PC-9 (cell line): ENCODE measurements at regions of chr19 and their contacts with region 1.

Region 1: DNA sequence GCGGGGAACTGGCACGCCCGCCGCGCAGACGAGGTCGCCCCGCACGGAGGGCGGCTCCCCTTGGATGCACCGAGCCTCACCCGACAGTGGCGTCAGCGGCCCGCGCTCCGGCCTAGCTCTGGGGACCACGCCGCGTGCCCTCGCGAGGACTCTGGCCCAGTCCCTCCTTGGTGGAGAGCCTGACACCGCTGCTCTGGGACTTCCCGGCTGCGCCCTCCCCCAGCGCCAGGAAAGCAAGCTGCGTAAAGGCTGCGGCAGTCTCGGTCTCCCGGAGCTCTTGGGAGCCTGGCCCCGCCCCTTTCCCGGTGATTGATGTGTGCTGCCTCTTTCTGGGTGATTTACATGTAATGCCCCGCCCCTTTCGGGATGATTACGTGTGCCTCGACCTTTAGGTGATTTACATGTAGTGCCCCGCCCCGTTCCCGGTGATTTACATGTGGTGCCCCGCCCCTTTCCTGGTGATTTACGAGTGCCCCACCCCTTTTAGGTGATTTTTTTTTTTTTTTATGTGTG is at the start of gene LENG9:
- DNase-seq: peak; percentile 97 to 99
- H3K4me3 ChIP-seq: peak within 1 kb of the TSS; percentile 77
- H3K27ac ChIP-seq: peak within 1 kb of the TSS; percentile 89
- H3K4me1 ChIP-seq: peaks cover 18% of the 10 kb centered on the region
- H3K27me3 ChIP-seq: no peaks in the 10 kb centered on the region
- CTCF ChIP-seq: no peak
- total RNA-seq, gene LENG9: 7.0 and 8.9 TPM in 2 replicates

Region 2: DNA sequence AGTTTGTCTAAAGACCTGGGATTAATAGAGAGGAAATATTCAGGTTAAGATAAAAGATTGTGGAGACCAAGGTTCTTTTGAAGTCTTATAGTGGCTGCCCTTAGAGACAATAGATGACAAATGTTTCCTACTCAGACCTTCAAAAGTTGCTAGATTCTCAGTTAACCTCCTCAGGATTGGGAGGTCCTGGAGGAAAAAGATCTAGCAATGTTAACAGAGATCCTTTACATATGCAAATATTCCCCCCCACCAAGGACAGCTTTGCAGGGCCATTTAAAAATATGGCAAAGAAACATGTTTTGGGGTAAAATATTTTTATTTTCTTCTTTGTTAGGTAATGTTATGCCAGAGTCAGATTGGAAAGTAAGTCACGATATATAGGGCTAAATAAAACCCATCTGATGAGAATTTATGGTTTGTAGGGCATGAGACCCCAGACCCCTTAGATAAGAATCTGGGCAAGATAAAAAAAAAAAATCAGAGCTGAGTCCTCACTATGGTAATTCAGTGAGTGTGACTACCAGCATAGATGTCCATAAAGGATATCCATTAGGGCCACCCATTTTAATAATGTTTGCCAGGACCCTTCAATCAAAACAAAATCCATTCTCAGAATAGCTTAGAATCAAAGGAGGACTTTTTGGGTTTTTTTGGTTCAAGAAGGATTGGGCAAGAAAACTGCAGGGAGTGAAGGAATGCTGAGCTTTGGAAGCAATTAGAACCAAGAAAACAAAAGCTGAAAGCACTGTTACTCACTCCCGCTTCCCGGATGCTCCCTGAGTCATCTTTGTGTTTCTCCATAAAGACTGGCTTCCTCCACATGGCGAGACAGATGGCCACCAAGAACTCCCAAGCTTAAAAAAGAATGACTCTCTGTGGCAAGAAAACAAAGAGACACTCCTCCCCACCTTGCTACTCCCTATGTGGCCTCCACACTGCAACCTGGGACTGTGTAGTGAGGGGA is 428.1 kb before region 1 on chr19:
- CTCF ChIA-PET with region 1: interaction called, 16 read pairs
- POLR2A ChIA-PET with region 1: no interaction called
- intact Hi-C with region 1: no loop called
- DNase-seq: peak; percentile 32 to 75
- H3K4me3 ChIP-seq: no peak overlapping the region
- H3K27ac ChIP-seq: peak overlapping the region; percentile 36
- H3K4me1 ChIP-seq: peaks cover 21% of the 10 kb centered on the region
- H3K27me3 ChIP-seq: no peaks in the 10 kb centered on the region
- CTCF ChIP-seq: no peak

Region 3: DNA sequence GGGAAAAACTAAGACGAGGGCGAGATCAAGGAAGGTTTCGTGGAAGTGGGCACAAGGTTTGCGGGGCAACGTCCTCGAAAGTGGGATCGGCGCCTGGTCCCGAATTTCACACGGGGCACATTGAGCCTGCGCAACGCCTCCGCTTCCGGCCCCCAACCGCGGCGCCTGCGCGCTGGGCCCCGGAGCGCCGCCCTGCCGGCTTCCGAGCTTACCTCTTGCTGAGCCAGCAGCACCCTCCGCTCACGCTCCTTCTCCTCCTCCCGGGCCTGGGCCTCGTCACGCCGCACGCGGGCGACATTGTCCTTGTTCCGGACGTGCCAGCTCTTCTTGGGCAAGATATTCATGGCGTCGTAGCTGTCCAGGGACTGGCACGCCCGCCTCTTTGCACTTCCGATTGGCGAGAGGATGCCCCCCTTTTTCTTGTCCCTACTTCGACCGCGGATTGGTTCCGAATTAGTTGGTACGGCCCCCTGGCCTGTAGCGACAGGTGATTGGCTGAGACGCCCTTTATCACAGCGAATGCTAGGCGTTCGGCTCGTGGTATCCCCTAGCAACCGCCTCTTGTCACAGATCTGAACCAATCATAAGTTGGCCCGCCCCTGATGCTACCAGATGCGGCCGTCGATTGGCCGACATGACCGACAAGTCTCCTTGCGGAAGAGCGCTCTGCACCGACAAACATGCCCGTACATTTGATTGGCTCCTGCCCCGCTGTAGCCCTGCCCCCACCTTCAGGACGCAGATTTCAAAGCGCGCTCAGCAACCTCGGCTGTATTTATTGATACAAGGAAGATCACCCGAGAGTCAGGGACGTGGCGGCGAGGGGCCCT is 304.0 kb before region 1 on chr19 and contains the start of gene LENG1:
- CTCF ChIA-PET with region 1: no interaction called
- POLR2A ChIA-PET with region 1: no interaction called
- intact Hi-C with region 1: loop called (anchors 10 kb)
- DNase-seq: peak; percentile 100
- H3K4me3 ChIP-seq: peak within 1 kb of the TSS; percentile 82
- H3K27ac ChIP-seq: peak within 1 kb of the TSS; percentile 57
- H3K4me1 ChIP-seq: peaks cover 33% of the 10 kb centered on the region
- H3K27me3 ChIP-seq: no peaks in the 10 kb centered on the region
- CTCF ChIP-seq: peak; percentile 53; the same call in 1 of the 2 replicates
- total RNA-seq, gene LENG1: 5.0 and 6.7 TPM in 2 replicates

Region 4: GRCh38 chr19:54448774-54449700 is 14.6 kb before region 1 on chr19 and contains the start of gene LENG8:
- CTCF ChIA-PET with region 1: interaction called, 3 read pairs
- POLR2A ChIA-PET with region 1: interaction called, 35 read pairs
- intact Hi-C with region 1: loop called (anchors 1 kb)
- DNase-seq: peak; percentile 94 to 98
- H3K4me3 ChIP-seq: peak within 1 kb of the TSS; percentile 96
- H3K27ac ChIP-seq: peak within 1 kb of the TSS; percentile 65
- H3K4me1 ChIP-seq: peaks cover 25% of the 10 kb centered on the region
- H3K27me3 ChIP-seq: no peaks in the 10 kb centered on the region
- CTCF ChIP-seq: no peak
- total RNA-seq, gene LENG8: 274 and 279 TPM in 2 replicates

Region 5: GRCh38 chr19:55117636-55118391 is 654.2 kb after region 1 on chr19 and contains the start of gene PPP1R12C:
- CTCF ChIA-PET with region 1: no interaction called
- POLR2A ChIA-PET with region 1: interaction called, 21 read pairs
- intact Hi-C with region 1: no loop called
- DNase-seq: peak; percentile 98 to 99
- H3K4me3 ChIP-seq: peak within 1 kb of the TSS; percentile 99
- H3K27ac ChIP-seq: peak within 1 kb of the TSS; percentile 47
- H3K4me1 ChIP-seq: peaks cover 22% of the 10 kb centered on the region
- H3K27me3 ChIP-seq: no peaks in the 10 kb centered on the region
- CTCF ChIP-seq: no peak; the same call in 1 of the 2 replicates
- total RNA-seq, gene PPP1R12C: 110 and 114 TPM in 2 replicates